Activated CD4-positive, alpha-beta T cell treated with anti-CD3 and anti-CD28 coated beads for 36 hours (primary cell): ENCODE measurements at regions of chr22 and their contacts with region 1.

Region 1: GRCh38 chr22:29202212-29203192 is 3.2 kb upstream of the EMID1 start:
- DNase-seq: peak; percentile 80
- ATAC-seq: peak; percentile 74
- H3K4me3 Mint-ChIP-seq: no peak overlapping the region
- H3K27ac Mint-ChIP-seq: peak overlapping the region; percentile 19
- H3K4me1 Mint-ChIP-seq: peaks cover 16% of the 10 kb centered on the region
- H3K27me3 Mint-ChIP-seq: peaks cover 34% of the 10 kb centered on the region

Region 2: GRCh38 chr22:29167032-29167911 is 35.2 kb before region 1 on chr22:
- CTCF ChIA-PET with region 1: no interaction called
- POLR2A ChIA-PET with region 1: no interaction called
- intact Hi-C with region 1: loop called in 1 of 2 experiments (anchors 1 kb)
- DNase-seq: peak; percentile 83
- ATAC-seq: peak; percentile 94
- H3K4me3 Mint-ChIP-seq: peak overlapping the region; percentile 1
- H3K27ac Mint-ChIP-seq: peak overlapping the region; percentile 82
- H3K4me1 Mint-ChIP-seq: peaks cover 18% of the 10 kb centered on the region
- H3K27me3 Mint-ChIP-seq: peaks cover 14% of the 10 kb centered on the region